Ascending aorta (tissue), 2 donors: ENCODE measurements at regions of chr1 and their contacts with region 1.

Region 1: DNA sequence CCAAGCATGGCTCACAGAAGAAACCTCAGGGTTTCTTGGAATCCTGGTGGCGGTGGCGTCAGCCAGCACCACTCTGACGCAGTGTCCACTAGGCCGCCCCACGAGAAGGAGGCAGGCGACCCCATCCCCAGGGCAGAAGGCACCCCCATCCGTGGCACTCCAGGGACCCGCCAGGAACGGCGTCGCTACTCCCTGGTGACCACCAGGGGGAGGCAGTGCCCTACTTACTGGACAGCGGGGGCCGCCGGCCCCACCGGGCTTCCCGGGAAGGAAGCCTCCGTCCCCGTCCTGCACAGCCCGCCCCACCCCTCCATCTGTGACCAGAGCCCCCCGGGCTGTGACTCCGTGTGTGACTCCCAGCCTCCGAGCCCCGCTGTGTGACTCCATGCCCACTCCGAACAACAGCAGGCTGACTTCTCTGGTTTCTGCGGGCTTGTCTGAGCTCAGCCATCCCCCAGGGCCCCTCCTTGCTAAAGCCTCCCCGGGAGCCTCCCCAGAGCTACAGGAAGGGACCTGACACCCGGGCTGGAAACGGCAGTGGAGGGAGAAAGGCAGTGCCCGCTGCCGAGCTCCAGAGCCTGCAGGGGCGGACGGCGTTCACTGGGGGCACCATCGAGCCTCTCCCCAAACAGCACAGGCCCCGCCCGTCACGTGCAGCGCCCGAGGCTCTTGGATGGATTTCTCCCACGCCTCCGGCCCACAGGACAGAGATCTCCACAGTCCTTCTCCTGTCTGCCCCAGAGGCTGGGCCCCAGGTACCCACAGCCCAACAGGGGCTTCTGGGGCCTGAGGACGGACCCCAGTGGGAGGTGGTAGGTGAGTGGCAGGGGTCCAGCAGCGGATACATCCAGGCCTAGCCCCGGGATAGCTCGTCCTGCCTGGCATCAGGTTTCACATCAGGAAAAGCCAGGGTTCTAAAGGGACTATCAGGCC is 21.1 kb downstream of the KIF17 start:
- DNase-seq: peak; percentile 46 to 91
- H3K4me3 ChIP-seq: peak overlapping the region; percentile 67 to 76
- H3K27ac ChIP-seq: peak overlapping the region; percentile 74 to 84
- H3K4me1 ChIP-seq: peaks cover 0 to 2% of the 10 kb centered on the region in 2 donors
- H3K27me3 ChIP-seq: no peaks in the 10 kb centered on the region
- CTCF ChIP-seq: peak; percentile 75 to 91 (median 78)

Region 2: DNA sequence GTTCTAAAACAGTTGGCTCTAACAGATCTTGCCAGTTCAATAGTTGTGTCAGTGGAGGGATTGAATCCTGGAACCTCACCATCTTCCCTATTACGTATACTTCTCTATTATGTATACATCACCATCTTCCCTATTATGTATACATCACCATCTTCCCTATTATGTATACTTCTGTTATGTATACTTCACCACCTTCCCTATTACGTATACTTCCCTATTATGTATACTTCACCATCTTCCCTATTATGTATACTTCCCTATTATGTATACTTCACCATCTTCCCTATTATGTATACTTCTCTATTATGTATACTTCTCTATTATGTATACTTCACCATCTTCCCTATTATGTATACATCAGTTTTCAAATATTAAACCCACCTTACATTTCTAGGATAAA is 124.8 kb after region 1 on chr1:
- intact Hi-C with region 1: no loop called
- DNase-seq: no peak
- H3K4me3 ChIP-seq: no peak overlapping the region
- H3K27ac ChIP-seq: no peak overlapping the region
- H3K4me1 ChIP-seq: no peaks in the 10 kb centered on the region
- H3K27me3 ChIP-seq: no peaks in the 10 kb centered on the region
- CTCF ChIP-seq: no peak

Region 3: GRCh38 chr1:20992322-20993056 is 295.8 kb after region 1 on chr1:
- intact Hi-C with region 1: loop called (anchors 10 kb)
- DNase-seq: no peak
- H3K4me3 ChIP-seq: no peak overlapping the region
- H3K27ac ChIP-seq: no peak overlapping the region
- H3K4me1 ChIP-seq: no peaks in the 10 kb centered on the region
- H3K27me3 ChIP-seq: no peaks in the 10 kb centered on the region
- CTCF ChIP-seq: no peak

Region 4: GRCh38 chr1:21200767-21201166 is 504.1 kb after region 1 on chr1:
- intact Hi-C with region 1: loop called (anchors 1 kb)
- DNase-seq: no peak
- H3K4me3 ChIP-seq: no peak overlapping the region
- H3K27ac ChIP-seq: no peak overlapping the region
- H3K4me1 ChIP-seq: no peaks in the 10 kb centered on the region
- H3K27me3 ChIP-seq: no peaks in the 10 kb centered on the region
- CTCF ChIP-seq: no peak